Endothelial cell of umbilical vein (primary cell): ENCODE measurements at regions of chr11 and their contacts with region 1.

Region 1: DNA sequence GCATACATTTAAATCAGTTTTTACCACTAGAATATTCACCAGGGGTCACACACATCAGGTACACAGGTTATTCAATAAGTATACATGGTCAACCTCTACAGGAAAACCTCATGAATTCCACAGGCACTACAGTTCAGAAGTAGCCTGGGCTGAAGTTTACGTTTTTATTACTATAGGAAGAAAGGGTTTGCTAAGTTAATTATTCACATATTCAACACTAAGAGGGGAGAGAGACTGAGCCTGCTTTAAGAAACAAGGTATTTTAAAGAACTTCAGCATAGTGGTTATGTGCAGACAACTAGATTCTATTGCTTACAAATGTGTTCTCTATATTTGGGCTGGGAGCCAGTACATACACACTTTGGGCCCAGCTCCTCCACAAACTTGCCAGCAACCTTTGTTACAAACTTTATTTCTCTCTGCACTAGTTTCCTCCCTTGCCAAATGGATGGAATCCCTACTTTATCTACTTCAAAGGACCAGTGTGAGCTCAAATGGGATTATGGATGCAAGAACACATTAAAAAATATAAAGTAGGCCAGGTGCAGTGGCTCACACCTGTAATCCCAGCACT is 31.9 kb downstream of the IL18BP start:
- DNase-seq: no peak
- H3K4me3 ChIP-seq: no peak overlapping the region
- H3K27ac ChIP-seq: no peak overlapping the region
- H3K4me1 ChIP-seq: peaks cover 2% of the 10 kb centered on the region
- H3K27me3 ChIP-seq: no peaks in the 10 kb centered on the region
- CTCF ChIP-seq: no peak
- POLR2A ChIP-seq: no peak

Region 2: GRCh38 chr11:72040726-72041441 is 10.3 kb after region 1 on chr11:
- CTCF ChIA-PET with region 1: interaction called, 89 read pairs
- POLR2A ChIA-PET with region 1: interaction called, 3 read pairs
- dilution Hi-C with region 1: no loop called
- intact Hi-C with region 1: no loop called
- DNase-seq: peak; percentile 96
- H3K4me3 ChIP-seq: peak overlapping the region; percentile 28 to 66 (median 58)
- H3K27ac ChIP-seq: peak overlapping the region; percentile 90
- H3K4me1 ChIP-seq: peaks cover 38% of the 10 kb centered on the region
- H3K27me3 ChIP-seq: no peaks in the 10 kb centered on the region
- CTCF ChIP-seq: no peak
- POLR2A ChIP-seq: no peak

Region 3: GRCh38 chr11:72080256-72080974 is 49.9 kb after region 1 on chr11 and contains the starts of genes LRRC51 and NUMA1:
- CTCF ChIA-PET with region 1: interaction called, 93 read pairs
- POLR2A ChIA-PET with region 1: no interaction called
- dilution Hi-C with region 1: loop called (anchors 10 kb)
- intact Hi-C with region 1: no loop called
- DNase-seq: peak; percentile 100
- H3K4me3 ChIP-seq: peak within 1 kb of the TSS; percentile 64 to 82 (median 78)
- H3K27ac ChIP-seq: peak within 1 kb of the TSS; percentile 94
- H3K4me1 ChIP-seq: peaks cover 28% of the 10 kb centered on the region
- H3K27me3 ChIP-seq: no peaks in the 10 kb centered on the region
- CTCF ChIP-seq: no peak
- POLR2A ChIP-seq: no peak
- total RNA-seq, gene LRRC51: 3.8 and 6.1 TPM in 2 replicates
- total RNA-seq, gene NUMA1: 164 and 168 TPM in 2 replicates

Region 4: GRCh38 chr11:72102946-72103753 is 72.6 kb after region 1 on chr11 and contains the start of gene LAMTOR1:
- CTCF ChIA-PET with region 1: interaction called, 35 read pairs
- POLR2A ChIA-PET with region 1: no interaction called
- dilution Hi-C with region 1: no loop called
- intact Hi-C with region 1: no loop called
- DNase-seq: peak; percentile 99
- H3K4me3 ChIP-seq: peak within 1 kb of the TSS; percentile 74 to 97 (median 86)
- H3K27ac ChIP-seq: peak within 1 kb of the TSS; percentile 88
- H3K4me1 ChIP-seq: peaks cover 26% of the 10 kb centered on the region
- H3K27me3 ChIP-seq: no peaks in the 10 kb centered on the region
- CTCF ChIP-seq: peak; percentile 34 to 38
- POLR2A ChIP-seq: peak; percentile 92
- total RNA-seq, gene LAMTOR1: 91.1 and 95.1 TPM in 2 replicates

Region 5: DNA sequence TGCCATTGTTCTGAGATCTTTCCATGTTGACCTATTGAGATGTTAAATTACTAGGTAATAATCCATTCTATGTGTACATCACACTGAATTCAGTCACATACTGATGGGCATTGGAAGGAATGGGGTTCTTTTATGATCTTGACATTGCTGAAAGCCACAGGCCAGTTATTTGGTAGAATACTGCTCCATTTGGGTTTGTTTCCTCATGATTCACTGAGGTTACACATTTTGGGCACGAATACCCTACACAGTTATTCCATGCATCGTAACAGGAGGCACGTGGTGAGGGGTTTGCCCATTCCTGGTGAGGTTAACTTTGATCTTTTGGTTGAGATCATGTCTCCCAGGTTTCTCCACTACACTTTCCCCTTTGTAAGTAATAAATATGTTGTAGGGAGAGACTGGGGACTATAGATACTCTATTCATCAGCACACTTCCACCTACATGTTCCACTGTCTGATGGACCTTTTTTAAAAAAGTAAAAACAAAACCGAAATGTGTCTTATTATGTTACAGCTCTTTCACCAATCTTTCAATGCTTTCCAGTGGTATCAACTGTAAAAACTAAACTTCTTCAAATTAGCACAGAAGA is 149.3 kb after region 1 on chr11:
- CTCF ChIA-PET with region 1: interaction called, 54 read pairs
- POLR2A ChIA-PET with region 1: no interaction called
- dilution Hi-C with region 1: no loop called
- intact Hi-C with region 1: loop called (anchors 1 kb)
- DNase-seq: no peak
- H3K4me3 ChIP-seq: no peak overlapping the region
- H3K27ac ChIP-seq: no peak overlapping the region
- H3K4me1 ChIP-seq: no peaks in the 10 kb centered on the region
- H3K27me3 ChIP-seq: peaks cover 11% of the 10 kb centered on the region in 2 experiments
- CTCF ChIP-seq: no peak
- POLR2A ChIP-seq: no peak

Region 6: GRCh38 chr11:72238040-72238450 is 207.5 kb after region 1 on chr11:
- CTCF ChIA-PET with region 1: interaction called, 13 read pairs
- POLR2A ChIA-PET with region 1: no interaction called
- dilution Hi-C with region 1: no loop called
- intact Hi-C with region 1: loop called (anchors 1 kb)
- DNase-seq: peak; percentile 51
- H3K4me3 ChIP-seq: no peak overlapping the region
- H3K27ac ChIP-seq: no peak overlapping the region
- H3K4me1 ChIP-seq: peaks cover 12% of the 10 kb centered on the region
- H3K27me3 ChIP-seq: peaks cover 28 to 37% of the 10 kb centered on the region in 2 experiments
- CTCF ChIP-seq: peak; percentile 77 to 85
- POLR2A ChIP-seq: peak; percentile 45